ENCODE measurements at regions of chr6 and their contacts with region 1.

Region 1: DNA sequence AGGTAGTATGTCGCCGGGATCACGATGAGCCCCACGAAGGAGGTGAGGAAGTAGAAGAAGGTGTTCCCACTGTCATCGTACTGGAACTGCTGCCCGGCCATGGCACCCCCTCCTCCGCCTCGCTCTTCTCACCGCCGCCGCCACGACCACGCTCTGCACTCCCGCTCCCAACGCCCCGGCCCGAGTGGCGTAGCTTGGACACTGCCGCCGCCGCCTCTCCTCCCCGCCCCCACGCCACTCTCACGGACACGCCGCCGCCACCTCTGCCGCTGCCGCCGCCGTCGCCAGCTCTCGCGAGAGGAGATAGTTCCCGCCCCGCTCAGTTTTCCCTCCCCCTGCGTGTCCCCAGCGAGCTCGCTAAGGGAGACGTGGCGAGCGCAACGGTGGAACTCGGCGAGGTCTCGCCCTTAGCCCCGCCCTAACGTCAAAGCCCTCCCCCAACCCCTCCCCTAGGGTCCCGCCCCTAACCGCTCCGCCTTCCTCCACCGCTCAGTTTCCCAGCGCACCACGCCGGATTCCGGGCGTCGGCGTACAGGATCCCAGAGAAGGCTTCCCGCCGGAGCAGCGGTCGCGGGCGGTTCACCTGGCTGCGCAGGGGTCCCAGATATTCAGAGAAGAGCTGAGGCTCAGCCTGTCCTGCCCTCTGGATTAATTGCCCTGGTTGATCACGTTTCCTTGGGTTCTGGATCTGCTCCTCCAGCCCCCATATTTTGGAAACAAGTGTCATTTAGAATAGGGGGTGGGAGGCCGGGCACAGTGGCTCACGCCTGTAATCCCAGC is at the start of gene SEC63:
- DNase-seq: peak; percentile 98
- H3K4me3 Mint-ChIP-seq: peak within 1 kb of the TSS; percentile 97
- H3K27ac Mint-ChIP-seq: peak within 1 kb of the TSS; percentile 94
- H3K4me1 Mint-ChIP-seq: peaks cover 32% of the 10 kb centered on the region
- H3K27me3 Mint-ChIP-seq: no peaks in the 10 kb centered on the region
- total RNA-seq, gene SEC63: 78.3 to 86.5 TPM

Region 2: GRCh38 chr6:107026965-107027364 is 931.1 kb before region 1 on chr6:
- CTCF ChIA-PET with region 1: no interaction called
- intact Hi-C with region 1: loop called (anchors 5 kb)
- DNase-seq: no peak
- H3K4me3 Mint-ChIP-seq: peak overlapping the region; percentile 95
- H3K27ac Mint-ChIP-seq: no peak overlapping the region
- H3K4me1 Mint-ChIP-seq: peaks cover 28% of the 10 kb centered on the region
- H3K27me3 Mint-ChIP-seq: no peaks in the 10 kb centered on the region

Region 3: DNA sequence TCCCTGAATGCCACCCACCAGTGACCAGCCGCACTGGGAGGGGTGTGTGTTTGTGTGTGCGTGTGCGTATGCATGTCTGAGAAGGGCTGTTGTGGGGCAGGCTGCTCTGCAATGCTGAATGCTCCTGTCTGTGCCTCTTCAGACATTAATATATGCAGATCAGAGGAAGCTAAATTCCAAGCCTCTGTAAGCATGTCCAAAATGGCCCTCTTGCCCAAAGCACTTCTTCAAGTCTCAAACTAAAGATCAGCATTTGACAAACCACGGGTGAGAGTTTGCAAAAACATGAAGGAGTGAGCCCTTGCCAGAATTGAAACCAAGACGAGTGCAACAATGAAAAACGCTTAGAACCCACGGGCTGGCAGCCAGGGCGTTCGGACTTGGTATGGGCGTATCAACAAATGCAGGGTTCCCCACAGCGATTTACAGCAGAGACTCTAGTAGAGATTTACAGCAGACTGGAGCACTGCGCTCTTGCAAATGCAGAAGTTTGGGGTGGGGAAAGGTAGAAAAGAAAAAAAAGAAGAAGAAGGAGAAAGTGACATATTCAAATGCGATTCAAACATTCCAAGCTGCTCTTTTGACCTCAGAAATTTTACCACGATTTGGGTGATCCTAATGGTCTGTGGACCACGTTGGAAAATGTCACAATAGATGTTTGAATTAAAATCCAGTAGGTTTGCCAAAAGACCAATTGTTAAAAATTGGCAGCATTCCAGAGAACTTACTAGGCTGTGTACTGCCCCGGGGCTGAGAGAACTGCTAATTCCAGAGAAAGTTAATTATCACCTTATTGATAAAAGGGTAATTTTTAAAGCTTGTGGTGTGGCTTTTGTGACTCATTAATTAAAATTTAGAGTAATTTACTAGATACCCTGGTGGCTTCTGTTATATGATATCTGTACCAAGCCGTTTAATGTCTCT is 137.5 kb before region 1 on chr6:
- CTCF ChIA-PET with region 1: no interaction called
- intact Hi-C with region 1: loop called (anchors 1 kb)
- DNase-seq: peak; percentile 55
- H3K4me3 Mint-ChIP-seq: peak overlapping the region; percentile 88
- H3K27ac Mint-ChIP-seq: peak overlapping the region; percentile 98
- H3K4me1 Mint-ChIP-seq: peaks cover 83% of the 10 kb centered on the region
- H3K27me3 Mint-ChIP-seq: no peaks in the 10 kb centered on the region

Region 4: DNA sequence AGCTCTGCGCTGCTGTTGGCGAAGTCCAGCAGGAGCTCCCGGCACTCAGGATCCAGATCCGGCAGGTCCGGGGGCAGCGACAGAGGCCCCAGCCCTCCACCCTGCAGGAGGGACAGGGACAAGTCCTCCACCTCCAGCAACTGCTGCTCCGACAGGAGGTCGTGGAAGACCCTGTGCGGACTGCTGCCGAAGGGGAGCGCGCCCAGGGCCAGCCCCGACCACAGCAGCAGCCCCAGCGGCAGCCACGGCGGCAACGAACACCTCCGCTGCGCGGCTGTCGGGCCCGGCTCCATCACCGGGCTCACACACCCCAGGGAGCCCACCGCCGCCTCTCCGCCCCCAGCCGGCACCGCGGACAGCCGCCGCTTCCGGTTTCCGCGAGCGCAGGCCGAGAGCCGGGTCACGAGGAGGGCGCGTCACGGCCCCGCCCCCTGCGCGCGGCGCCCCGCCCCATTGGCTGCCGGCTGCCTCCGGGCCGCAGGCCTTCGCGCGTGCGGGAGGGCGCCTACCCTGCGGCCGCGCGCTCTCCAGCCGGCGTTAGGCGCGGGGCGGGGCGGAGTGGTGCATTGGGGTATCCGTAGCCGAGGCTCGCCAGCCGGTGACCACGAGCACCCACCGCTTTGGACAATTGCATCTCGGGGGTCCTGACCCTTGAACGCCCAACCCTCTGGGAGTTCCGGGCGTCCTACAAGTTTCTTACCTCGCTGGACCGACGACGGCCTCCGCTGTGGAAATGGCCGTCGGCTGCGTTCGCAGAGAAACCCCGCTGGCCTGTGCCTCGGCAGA is 116.5 kb after region 1 on chr6 and contains the start of gene OSTM1:
- CTCF ChIA-PET with region 1: no interaction called
- intact Hi-C with region 1: loop called (anchors 1 kb)
- DNase-seq: peak; percentile 93
- H3K4me3 Mint-ChIP-seq: peak within 1 kb of the TSS; percentile 80
- H3K27ac Mint-ChIP-seq: peak within 1 kb of the TSS; percentile 78
- H3K4me1 Mint-ChIP-seq: peaks cover 30% of the 10 kb centered on the region
- H3K27me3 Mint-ChIP-seq: no peaks in the 10 kb centered on the region
- total RNA-seq, gene OSTM1: 7.1 to 7.5 TPM